ENCODE measurements at regions of chr5 and their contacts with region 1.

Region 1: DNA sequence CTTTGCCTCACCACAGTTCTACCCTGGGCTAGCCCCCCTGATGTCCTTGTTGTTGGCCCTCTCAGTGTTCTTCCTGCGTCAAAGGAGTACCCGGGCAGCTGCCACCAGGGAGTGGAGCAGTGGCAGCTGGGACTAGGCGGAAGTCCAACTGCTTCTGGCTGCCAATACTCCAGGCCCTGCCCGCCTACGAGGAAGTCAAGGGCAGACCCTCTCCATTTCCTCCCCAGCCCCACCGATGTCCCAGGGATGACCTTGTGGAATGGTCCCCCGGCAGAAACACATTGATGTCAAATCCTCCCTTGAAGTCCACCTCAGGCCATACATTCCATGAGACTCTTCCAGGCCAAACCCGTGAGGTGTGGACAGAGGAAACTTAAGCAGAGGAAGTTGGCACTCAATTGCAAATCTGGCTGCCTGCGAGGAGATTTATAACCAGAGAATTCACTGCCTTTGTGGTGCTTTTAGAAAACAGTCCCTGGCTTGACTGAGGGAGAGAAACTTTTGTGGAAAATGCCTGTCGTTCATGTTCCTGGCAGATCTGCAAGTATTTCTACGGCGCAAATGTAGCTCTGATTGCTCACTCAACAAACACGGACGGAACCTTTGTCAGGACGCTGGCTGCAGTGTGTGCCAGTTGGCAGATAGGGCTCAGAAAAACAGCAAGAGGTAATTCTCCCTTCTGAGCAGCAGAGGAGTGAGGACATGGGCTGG is 339.7 kb downstream of the RAB3C start:
- DNase-seq: peak; percentile 84 to 93
- ATAC-seq: peak; percentile 92 to 95 (median 94)
- H3K4me3 ChIP-seq: peak overlapping the region; percentile 54
- H3K27ac ChIP-seq: peak overlapping the region; percentile 96
- H3K4me1 ChIP-seq: peaks cover 52% of the 10 kb centered on the region
- H3K27me3 ChIP-seq: no peaks in the 10 kb centered on the region
- CTCF ChIP-seq: no peak

Region 2: DNA sequence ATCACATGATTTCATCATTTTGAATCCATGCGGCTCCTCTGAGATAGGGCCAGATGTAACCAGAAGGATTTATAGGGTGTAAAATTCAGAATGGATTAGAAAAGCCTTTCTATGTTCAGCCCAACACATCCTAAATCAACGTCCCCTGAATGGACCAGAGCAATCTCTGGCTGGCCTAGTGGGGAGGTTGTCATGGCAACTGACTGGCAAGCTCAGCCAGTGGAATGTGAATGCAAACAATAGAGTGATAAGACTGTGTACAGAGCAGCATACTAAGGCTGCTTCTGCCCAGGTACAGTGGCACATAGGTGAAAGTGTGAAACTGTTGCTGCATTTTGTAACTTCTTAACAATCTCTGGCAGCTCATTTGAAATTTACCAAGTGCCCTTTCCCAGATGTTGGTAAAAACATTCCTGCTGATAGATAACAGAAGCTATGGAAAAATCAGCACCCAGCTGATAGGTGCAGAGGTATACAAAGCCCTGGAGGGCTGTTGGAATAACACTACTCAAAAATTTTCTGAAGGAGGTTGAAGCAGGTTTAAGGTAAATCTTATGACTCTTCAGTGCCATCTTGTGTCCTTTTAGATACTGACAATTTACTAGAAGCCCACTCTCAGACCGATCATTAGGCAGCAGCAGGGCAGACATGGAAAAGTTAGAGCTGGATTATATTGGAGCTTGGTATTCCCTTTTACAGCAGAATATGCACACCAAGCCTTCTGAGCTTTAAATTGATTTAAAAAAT is 72.5 kb before region 1 on chr5:
- intact Hi-C with region 1: no loop called
- DNase-seq: no peak
- ATAC-seq: peak in 2 of 4 donors; percentile 40 to 56
- H3K4me3 ChIP-seq: no peak overlapping the region
- H3K27ac ChIP-seq: no peak overlapping the region
- H3K4me1 ChIP-seq: no peaks in the 10 kb centered on the region
- H3K27me3 ChIP-seq: no peaks in the 10 kb centered on the region
- CTCF ChIP-seq: peak; percentile 51

Region 3: GRCh38 chr5:58875599-58875998 is 47.0 kb before region 1 on chr5:
- intact Hi-C with region 1: no loop called
- DNase-seq: no peak
- ATAC-seq: no peak
- H3K4me3 ChIP-seq: no peak overlapping the region
- H3K27ac ChIP-seq: no peak overlapping the region
- H3K4me1 ChIP-seq: no peaks in the 10 kb centered on the region
- H3K27me3 ChIP-seq: no peaks in the 10 kb centered on the region
- CTCF ChIP-seq: no peak

Region 4: GRCh38 chr5:59007460-59008063 is 84.9 kb after region 1 on chr5:
- intact Hi-C with region 1: loop called in 1 of 2 experiments (anchors 10 kb)
- DNase-seq: no peak
- ATAC-seq: no peak
- H3K4me3 ChIP-seq: no peak overlapping the region
- H3K27ac ChIP-seq: peak overlapping the region; percentile 76
- H3K4me1 ChIP-seq: peaks cover 68% of the 10 kb centered on the region
- H3K27me3 ChIP-seq: no peaks in the 10 kb centered on the region
- CTCF ChIP-seq: peak; percentile 48

Region 5: DNA sequence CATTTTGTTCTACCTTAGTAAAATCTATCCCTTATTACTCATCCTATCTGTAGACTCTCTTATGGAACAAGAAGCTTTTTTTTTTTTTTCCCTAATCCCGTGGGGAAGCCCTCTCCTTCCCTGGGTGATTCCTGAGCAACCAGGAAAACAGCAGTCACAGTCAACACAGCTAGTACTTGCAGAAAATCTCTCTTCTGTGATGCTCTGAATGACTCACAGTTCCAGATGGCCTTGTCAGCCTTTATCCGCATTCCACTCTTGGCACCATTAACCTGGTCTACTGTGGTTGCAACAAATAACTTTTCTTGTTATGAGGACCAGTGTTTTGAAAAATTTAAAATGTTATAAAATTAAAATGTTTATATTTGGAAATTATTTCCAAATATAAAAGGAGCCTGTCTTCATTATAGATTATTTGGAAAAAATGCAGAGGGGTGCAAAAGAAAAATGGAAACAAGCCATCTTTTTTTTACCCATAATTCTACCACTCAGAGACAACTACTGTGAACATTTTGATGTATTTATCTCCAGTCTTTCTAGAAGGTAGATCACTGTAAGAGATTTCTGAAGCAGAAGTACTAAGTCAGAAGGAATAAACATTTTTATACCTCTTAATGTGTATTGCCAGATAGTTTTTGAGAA is 146.9 kb after region 1 on chr5:
- intact Hi-C with region 1: no loop called
- DNase-seq: no peak
- ATAC-seq: peak; percentile 80 to 90 (median 87)
- H3K4me3 ChIP-seq: no peak overlapping the region
- H3K27ac ChIP-seq: peak overlapping the region; percentile 48
- H3K4me1 ChIP-seq: peaks cover 5% of the 10 kb centered on the region
- H3K27me3 ChIP-seq: no peaks in the 10 kb centered on the region
- CTCF ChIP-seq: no peak

Region 6: DNA sequence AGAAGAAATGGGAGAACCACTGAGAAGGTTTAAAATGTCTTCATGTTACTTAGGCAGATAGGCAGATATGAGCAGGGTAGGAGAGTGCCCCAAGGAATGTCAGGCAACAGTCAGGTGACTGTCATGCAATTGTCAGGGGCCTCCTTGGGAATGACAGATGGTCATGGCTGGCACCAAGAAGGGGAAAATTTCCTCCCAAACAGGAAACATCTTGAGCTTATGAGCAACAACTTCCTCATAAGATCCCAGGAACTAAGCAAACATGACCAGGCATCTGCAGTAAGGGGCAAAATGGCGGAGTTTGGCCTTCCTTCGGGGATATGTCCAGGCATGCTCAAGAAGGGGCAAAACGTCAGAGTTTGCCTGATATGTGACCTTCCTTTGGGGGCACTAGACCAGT is 379.1 kb after region 1 on chr5:
- intact Hi-C with region 1: no loop called
- DNase-seq: no peak
- ATAC-seq: peak in 3 of 4 donors; percentile 23 to 28 (median 28)
- H3K4me3 ChIP-seq: no peak overlapping the region
- H3K27ac ChIP-seq: peak overlapping the region; percentile 47
- H3K4me1 ChIP-seq: peaks cover 30% of the 10 kb centered on the region
- H3K27me3 ChIP-seq: no peaks in the 10 kb centered on the region
- CTCF ChIP-seq: no peak

Measured in psoas muscle (tissue), 8 donors.